ENCODE measurements at regions of chr14 and their contacts with region 1.

Region 1: DNA sequence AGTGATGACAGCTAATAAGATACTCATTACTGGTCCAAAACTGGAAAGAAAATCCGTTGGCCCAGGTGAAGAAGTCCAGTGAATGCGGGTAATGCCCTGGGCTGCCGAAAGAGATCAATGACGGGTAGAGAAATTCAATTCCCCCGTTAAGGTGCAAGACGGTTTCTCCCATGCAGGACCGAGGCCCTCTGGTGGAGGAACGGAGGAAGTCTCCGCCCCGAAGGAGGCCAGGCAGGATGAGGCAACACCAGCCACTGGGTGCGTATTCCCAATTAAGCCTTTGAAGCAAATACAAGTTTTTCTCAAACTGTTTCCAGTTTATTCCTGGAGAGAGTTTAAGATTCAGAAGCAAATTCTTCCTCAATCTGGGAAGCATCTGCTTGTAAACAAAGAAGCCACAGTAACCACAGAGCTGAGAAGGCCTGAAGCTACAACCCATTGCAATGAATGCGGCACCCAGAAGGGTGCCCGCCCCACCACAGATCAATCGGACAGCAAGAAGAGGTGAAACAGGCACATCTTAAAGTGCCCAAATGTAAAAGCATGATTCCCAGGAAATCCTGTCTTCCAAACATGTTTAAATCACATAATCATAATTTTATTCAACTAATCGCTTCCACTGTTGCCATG is 118.5 kb downstream of the TTC7B start:
- DNase-seq: peak; percentile 89 to 92
- ATAC-seq: peak; percentile 96
- H3K4me3 ChIP-seq: no peak overlapping the region
- H3K27ac ChIP-seq: peak overlapping the region; percentile 52 to 53
- H3K4me1 ChIP-seq: no peaks in the 10 kb centered on the region
- H3K27me3 ChIP-seq: no peaks in the 10 kb centered on the region

Region 2: GRCh38 chr14:90301668-90302090 is 396.0 kb before region 1 on chr14:
- intact Hi-C with region 1: loop called (anchors 5 to 10 kb)
- DNase-seq: no peak
- ATAC-seq: peak; percentile 78
- H3K4me3 ChIP-seq: no peak overlapping the region
- H3K27ac ChIP-seq: peak overlapping the region in 1 of 2 donors; percentile 61
- H3K4me1 ChIP-seq: peaks cover 0 to 3% of the 10 kb centered on the region in 2 donors
- H3K27me3 ChIP-seq: no peaks in the 10 kb centered on the region

Region 3: DNA sequence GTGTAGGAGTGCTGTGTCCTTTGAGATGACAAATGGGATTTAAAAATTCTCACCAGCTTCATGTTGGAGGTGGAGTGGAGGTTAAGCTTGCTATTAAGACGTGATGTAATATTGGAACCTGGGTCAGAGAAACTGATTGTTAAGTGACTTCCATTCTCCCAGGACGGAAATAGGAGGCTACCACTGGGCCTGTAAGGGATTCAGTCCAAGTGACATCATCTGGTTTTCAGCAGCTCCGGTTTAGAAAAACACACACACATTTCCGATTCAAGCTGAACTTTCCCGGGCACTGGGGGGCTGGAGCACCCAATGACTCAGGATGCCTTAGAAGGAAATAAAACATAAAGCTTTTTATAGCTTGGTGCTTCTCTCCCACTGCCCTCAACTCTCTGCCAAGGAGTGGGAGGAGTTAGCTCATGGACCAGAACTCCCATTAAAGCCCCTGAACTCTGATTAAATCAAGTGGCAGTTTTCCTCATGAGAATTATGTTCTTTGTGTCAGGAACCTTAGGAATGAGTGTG is 288.4 kb before region 1 on chr14:
- intact Hi-C with region 1: loop called in 1 of 2 experiments (anchors 5 kb)
- DNase-seq: peak; percentile 88 to 89
- ATAC-seq: peak; percentile 92
- H3K4me3 ChIP-seq: no peak overlapping the region
- H3K27ac ChIP-seq: peak overlapping the region; percentile 96 to 99
- H3K4me1 ChIP-seq: no peaks in the 10 kb centered on the region
- H3K27me3 ChIP-seq: no peaks in the 10 kb centered on the region

Region 4: DNA sequence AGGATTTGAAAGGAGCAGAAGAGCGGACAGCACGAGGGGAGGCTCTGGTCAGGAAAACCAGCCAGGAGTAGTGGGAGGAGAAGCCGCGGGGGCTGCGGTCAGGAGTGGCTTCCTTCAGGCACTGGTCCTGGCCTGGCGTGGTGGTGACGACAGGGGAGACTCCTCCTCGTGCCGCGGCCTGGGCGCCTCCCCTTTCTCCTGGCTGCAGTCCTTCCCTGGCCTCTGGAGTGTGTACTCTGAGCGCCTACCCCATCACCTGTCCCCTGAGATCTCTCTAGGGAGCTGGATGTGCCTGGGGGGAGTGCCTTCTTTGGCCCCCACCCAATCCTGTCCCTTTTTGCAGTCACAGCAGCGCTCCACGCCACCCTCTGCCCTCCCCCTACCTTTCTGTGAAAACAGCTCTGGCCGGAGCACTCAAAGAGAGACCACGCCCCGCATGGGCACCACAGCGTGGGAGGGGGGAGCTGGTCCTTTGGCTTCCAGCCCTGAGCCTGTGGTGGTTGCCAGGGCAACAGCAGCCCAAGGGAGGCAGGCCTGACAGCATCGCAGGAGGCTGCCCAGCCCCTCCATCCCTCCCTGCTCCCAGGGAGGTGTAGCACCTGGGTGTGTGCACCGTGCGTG is 175.0 kb before region 1 on chr14:
- intact Hi-C with region 1: loop called in 1 of 2 experiments (anchors 5 kb)
- DNase-seq: peak; percentile 85 to 92
- ATAC-seq: peak; percentile 81
- H3K4me3 ChIP-seq: no peak overlapping the region
- H3K27ac ChIP-seq: peak overlapping the region in 1 of 2 donors; percentile 74
- H3K4me1 ChIP-seq: no peaks in the 10 kb centered on the region
- H3K27me3 ChIP-seq: no peaks in the 10 kb centered on the region

Region 5: DNA sequence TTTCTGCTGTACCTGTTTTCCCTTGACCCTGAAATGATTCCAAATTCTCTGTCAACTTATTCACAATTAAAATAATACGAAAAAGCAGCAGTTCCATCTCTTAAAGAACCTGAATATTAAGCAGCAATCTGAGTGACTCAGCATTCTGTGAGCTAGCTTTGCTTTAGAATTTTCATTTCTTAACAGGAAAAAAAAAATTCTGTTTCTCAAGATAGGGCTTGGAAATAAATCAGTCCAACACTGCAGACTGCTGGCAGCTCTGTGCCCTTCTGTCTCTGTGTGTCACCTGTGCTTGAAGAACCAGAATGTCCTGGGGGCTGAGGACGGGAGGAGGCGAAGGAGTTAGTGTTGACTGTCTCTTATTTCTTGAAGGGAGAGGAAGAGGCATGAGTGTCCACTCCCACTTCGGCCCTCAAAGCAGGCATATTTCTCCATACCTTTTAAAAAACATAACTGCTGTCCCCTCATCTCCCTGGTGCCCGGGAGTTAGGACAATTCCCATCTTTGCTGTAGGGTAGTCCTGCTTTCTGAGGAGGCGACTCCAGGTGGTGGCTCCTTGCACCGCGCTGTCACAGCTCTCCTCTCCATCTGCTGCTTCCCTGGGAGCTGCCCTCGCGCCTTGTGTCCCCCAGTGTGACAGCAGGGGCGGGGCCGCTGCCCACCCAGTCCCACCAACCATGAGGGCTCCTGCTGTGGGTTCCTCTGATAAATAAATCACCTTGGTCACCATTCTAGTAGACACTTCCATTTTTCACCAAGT is 97.8 kb before region 1 on chr14:
- intact Hi-C with region 1: loop called in 1 of 2 experiments (anchors 5 kb)
- DNase-seq: no peak
- ATAC-seq: peak; percentile 45
- H3K4me3 ChIP-seq: no peak overlapping the region
- H3K27ac ChIP-seq: no peak overlapping the region
- H3K4me1 ChIP-seq: no peaks in the 10 kb centered on the region
- H3K27me3 ChIP-seq: no peaks in the 10 kb centered on the region

Region 6: DNA sequence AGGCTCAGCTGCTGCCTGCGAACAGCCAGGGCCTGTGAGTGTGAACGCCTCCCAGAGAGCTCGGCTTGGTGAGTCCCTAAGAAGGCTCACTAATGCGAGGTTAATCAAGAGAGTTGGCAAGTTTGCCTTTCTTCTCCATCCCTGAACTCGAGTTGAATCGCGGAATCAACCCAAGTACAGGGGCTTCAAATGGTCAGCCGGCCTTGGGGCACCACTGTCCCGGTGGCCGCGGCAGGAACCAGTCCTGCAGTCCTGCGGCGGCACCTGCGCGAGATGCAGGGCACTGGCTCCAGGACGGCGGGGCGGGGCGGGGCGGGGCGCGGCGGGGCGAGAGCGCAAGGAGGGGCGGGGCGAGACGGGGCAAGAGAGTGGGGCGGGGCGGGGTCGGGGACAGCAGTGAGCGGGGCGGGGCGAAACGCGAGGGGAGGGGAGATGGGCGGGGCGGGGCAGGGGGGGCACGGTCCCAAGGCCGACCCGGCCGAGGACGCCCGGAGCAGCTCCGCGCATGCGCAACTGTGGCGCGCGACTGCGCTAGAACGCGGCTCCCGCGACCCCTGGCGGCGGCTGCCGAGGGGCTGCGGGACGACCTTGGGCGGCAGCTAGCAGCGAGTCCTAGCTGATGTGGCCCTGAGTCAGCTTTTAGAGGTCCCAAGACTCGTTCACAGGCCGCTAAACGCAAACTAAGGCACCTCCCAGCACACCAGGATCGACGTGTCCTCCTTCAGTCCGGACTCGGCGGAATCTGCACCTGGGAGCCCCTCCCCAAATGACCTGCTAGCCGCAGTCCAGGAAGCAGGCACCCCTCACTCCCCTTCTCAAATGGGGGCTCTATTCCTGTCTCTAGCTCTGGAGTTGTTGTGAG is 60.6 kb after region 1 on chr14:
- intact Hi-C with region 1: loop called in 1 of 2 experiments (anchors 5 kb)
- DNase-seq: peak; percentile 94 to 98
- ATAC-seq: peak; percentile 95
- H3K4me3 ChIP-seq: peak overlapping the region in 1 of 2 donors; percentile 56
- H3K27ac ChIP-seq: peak overlapping the region; percentile 89 to 92
- H3K4me1 ChIP-seq: peaks cover 1 to 4% of the 10 kb centered on the region in 2 donors
- H3K27me3 ChIP-seq: no peaks in the 10 kb centered on the region

Measured in aorta (tissue), 5 donors.